ENCODE measurements at regions of chr3 and their contacts with region 1.

Region 1: DNA sequence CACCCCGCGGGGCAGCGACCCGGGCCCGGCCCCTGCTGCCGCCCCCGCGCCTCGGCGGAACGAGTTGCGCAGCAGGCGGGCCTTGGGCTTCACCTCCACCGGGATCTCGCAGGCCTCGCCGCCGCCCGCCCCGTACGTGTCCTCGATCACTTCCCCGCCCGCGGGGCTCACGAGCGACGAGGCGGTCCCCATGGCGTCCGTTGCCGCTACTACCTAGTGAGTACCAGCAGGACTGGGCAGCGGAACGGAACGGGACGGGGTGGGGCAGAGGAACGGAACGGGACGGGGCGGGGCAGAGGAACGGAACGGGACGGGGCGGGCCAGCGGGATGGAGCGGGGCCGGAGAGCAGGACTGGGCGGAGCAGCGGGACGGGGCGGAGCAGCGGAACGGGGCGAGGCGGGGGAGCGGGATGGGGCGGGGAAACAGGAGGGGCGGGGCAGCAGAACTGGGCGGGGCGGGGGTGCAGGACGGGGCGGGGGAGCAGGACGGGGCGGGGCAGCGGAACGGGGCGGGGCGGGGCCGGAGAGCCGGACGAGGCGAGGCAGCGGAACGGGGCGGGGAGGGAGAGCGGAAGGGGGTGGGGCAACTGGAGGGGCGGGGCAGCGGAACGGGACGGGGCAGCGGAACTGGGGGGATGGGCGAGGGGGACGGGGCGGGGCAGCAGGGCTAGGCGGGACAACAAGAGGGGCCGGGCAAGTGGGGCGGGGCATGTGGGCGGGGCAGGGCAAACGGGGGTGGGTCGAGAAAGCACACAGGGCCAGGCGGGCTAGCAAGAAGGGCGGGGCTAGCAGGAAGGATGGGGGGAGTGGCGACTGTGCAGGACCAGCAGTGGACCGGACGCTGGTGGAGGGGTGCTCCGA is at the start of gene NPHP3:
- DNase-seq: peak; percentile 96
- H3K4me3 Mint-ChIP-seq: peak within 1 kb of the TSS; percentile 96
- H3K27ac Mint-ChIP-seq: peak within 1 kb of the TSS; percentile 88
- H3K4me1 Mint-ChIP-seq: peaks cover 30% of the 10 kb centered on the region
- H3K27me3 Mint-ChIP-seq: peaks cover 3% of the 10 kb centered on the region
- total RNA-seq, gene NPHP3: 13.4 and 16.8 TPM in 2 replicates

Region 2: GRCh38 chr3:132416807-132417694 is 305.3 kb before region 1 on chr3 and contains the start of gene DNAJC13:
- intact Hi-C with region 1: loop called (anchors 1 kb)
- DNase-seq: peak; percentile 97
- H3K4me3 Mint-ChIP-seq: peak within 1 kb of the TSS; percentile 98
- H3K27ac Mint-ChIP-seq: peak within 1 kb of the TSS; percentile 95
- H3K4me1 Mint-ChIP-seq: peaks cover 25% of the 10 kb centered on the region
- H3K27me3 Mint-ChIP-seq: peaks cover 3% of the 10 kb centered on the region
- total RNA-seq, gene DNAJC13: 33.6 and 34.0 TPM in 2 replicates

Region 3: DNA sequence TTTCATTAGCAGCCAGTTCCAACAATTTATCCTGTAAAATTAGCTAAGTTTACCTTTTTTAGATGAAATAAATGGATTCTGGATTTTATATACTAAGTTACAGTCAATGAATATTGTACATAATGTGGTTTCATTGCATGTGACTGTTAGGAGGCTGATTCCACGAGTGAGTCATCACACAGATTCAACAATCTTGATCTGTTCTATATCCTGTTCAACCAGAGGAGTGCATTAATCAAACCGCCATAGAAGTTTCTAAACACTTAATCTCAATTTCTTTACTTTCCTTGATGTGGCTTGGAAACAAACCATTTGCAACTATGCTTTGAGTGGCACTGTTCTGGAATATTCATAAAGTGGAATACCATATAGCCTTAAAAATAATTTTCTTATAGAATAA is 289.8 kb before region 1 on chr3:
- intact Hi-C with region 1: no loop called
- DNase-seq: no peak
- H3K4me3 Mint-ChIP-seq: no peak overlapping the region
- H3K27ac Mint-ChIP-seq: no peak overlapping the region
- H3K4me1 Mint-ChIP-seq: peaks cover 12% of the 10 kb centered on the region
- H3K27me3 Mint-ChIP-seq: no peaks in the 10 kb centered on the region

Region 4: GRCh38 chr3:132659365-132660051 is 62.9 kb before region 1 on chr3 and contains the start of gene ACAD11:
- intact Hi-C with region 1: loop called (anchors 1 kb)
- DNase-seq: peak; percentile 76
- H3K4me3 Mint-ChIP-seq: peak within 1 kb of the TSS; percentile 99
- H3K27ac Mint-ChIP-seq: peak within 1 kb of the TSS; percentile 98
- H3K4me1 Mint-ChIP-seq: peaks cover 39% of the 10 kb centered on the region
- H3K27me3 Mint-ChIP-seq: no peaks in the 10 kb centered on the region
- total RNA-seq, gene ACAD11: 12.9 and 18.9 TPM in 2 replicates

Region 5: DNA sequence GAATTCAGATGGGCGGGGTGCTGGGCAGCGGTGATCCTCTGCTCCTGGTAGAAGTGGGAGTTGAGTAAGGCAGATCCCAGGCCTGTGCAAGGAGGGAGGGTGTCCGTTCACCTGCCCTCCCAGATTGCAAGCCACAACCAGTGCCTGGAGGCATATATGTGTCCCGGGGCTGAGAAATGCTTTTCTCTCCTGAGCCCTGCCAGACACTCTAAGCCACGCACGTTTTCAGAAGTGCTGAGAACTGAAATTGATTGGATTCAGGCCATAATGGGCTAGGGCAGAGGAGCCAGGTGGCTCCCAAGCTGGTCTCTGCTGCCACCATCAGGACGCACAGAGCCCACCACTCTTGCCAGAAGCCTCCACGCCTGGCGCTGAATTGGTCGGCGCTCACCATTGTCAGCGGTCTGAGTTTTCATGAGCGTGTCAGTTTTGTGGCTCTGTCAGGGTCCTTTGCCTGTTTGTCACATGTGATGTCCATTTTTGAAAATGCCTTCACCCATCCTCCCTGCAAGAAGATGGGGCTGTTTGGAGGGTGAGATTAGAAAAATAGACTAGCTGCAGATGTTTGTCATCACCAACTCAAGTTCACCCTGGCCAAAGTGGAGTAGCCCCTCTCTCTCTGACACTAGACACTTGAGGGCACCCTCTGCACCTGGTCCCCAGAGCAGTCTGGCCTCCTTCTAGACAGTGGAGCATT is 662.1 kb after region 1 on chr3:
- intact Hi-C with region 1: loop called (anchors 2 kb)
- DNase-seq: peak; percentile 75
- H3K4me3 Mint-ChIP-seq: no peak overlapping the region
- H3K27ac Mint-ChIP-seq: no peak overlapping the region
- H3K4me1 Mint-ChIP-seq: no peaks in the 10 kb centered on the region
- H3K27me3 Mint-ChIP-seq: peaks cover 2% of the 10 kb centered on the region

Region 6: DNA sequence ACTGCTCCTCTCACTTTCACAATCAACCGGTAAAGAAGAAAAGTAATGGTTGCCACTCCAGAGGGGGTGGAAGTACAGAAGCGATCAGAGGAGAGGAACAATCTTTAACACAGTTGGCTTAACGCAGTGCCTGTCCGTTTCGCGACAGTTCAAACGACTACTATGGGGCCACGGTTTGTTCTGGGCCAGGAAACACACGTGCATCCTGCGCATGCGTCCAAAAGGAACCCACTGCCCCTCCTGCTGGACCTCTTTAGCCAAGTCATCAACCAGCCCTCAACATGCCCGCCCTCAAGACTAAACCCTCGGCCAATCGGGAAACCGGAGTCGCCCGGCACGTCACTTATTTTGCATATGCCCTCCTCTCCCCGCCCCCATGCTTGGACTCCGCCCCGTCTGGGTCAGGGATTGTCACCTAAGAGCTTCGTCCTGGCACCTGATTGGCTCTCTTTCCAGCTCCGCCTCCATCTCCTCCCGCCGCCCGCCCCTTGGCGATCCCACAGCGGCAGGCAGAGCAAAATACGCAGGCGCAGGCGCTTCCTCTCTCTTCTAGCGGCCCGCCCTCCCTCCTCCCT is 850.7 kb after region 1 on chr3:
- intact Hi-C with region 1: loop called (anchors 1 kb)
- DNase-seq: peak; percentile 100
- H3K4me3 Mint-ChIP-seq: peak overlapping the region; percentile 85
- H3K27ac Mint-ChIP-seq: peak overlapping the region; percentile 99
- H3K4me1 Mint-ChIP-seq: peaks cover 46% of the 10 kb centered on the region
- H3K27me3 Mint-ChIP-seq: no peaks in the 10 kb centered on the region

Region 7: GRCh38 chr3:133805527-133806475 is 1083.4 kb after region 1 on chr3 and contains the start of gene SRPRB:
- intact Hi-C with region 1: loop called (anchors 5 kb)
- DNase-seq: peak; percentile 98
- H3K4me3 Mint-ChIP-seq: peak within 1 kb of the TSS; percentile 99
- H3K27ac Mint-ChIP-seq: peak within 1 kb of the TSS; percentile 98
- H3K4me1 Mint-ChIP-seq: peaks cover 17% of the 10 kb centered on the region
- H3K27me3 Mint-ChIP-seq: peaks cover 16% of the 10 kb centered on the region
- total RNA-seq, gene SRPRB: 97.7 and 103 TPM in 2 replicates

Region 8: GRCh38 chr3:134485718-134486576 is 1763.6 kb after region 1 on chr3 and contains the starts of genes ANAPC13 and CEP63:
- intact Hi-C with region 1: loop called (anchors 2 kb)
- DNase-seq: peak; percentile 97
- H3K4me3 Mint-ChIP-seq: peak within 1 kb of the TSS; percentile 85
- H3K27ac Mint-ChIP-seq: peak within 1 kb of the TSS; percentile 98
- H3K4me1 Mint-ChIP-seq: peaks cover 38% of the 10 kb centered on the region
- H3K27me3 Mint-ChIP-seq: no peaks in the 10 kb centered on the region
- total RNA-seq, gene ANAPC13: 29.7 and 30.0 TPM in 2 replicates
- total RNA-seq, gene CEP63: 18.6 and 20.5 TPM in 2 replicates